ENCODE measurements at regions of chr1 and their contacts with region 1.

Region 1: GRCh38 chr1:226662642-226663326 is 76.3 kb downstream of the ITPKB start:
- DNase-seq: peak; percentile 73
- ATAC-seq: peak; percentile 84
- H3K4me3 Mint-ChIP-seq: peak overlapping the region; percentile 56
- H3K27ac Mint-ChIP-seq: peak overlapping the region; percentile 92
- H3K4me1 Mint-ChIP-seq: peaks cover 89% of the 10 kb centered on the region
- H3K27me3 Mint-ChIP-seq: no peaks in the 10 kb centered on the region
- CTCF ChIP-seq: no peak

Region 2: DNA sequence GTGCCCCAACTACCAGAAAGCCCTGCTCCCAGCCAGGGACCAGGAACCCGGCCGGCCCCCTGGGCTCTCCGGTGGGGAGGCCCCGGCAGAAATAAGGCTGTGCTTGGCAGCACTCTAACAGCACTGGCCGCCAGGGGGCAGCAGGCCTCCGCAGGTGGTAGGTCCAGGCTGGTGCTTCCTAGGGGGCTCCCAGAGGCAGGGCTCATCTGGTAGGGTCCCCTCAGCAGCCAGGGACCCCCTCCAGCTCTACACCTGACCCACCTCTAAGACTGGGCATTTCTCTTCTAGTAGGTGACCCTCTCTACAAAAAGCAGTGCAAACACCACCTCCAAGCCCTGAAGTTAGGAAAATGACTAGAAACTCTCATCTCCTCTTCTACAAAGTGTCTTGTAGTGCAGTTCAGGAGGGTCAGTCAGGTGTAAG is 28.6 kb before region 1 on chr1:
- CTCF ChIA-PET with region 1: interaction called, 6 read pairs
- POLR2A ChIA-PET with region 1: interaction called, 163 read pairs
- intact Hi-C with region 1: loop called (anchors 1 kb)
- DNase-seq: peak; percentile 81
- ATAC-seq: peak; percentile 72
- H3K4me3 Mint-ChIP-seq: no peak overlapping the region
- H3K27ac Mint-ChIP-seq: peak overlapping the region; percentile 60
- H3K4me1 Mint-ChIP-seq: peaks cover 72% of the 10 kb centered on the region
- H3K27me3 Mint-ChIP-seq: no peaks in the 10 kb centered on the region
- CTCF ChIP-seq: peak; percentile 56

Region 3: DNA sequence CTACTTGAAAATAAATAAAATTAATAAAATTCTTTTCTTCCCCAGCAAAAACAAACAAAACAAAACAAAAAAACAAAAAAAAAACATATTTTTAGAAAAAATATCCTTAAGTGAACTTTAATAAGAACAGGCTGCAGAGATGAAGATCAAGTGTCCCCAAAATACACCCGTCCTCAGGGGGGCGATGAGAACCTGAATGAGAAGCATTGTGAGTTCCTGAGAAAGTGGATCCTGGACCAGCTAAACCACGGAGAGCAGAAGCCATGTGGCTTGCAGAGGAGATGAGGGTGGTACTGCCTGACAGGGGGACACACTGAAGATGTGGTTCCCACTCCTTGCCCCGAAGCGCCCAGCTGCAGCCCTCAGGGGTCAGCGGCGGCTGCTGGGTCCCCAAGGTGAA is 13.0 kb before region 1 on chr1:
- CTCF ChIA-PET with region 1: interaction called, 31 read pairs
- POLR2A ChIA-PET with region 1: interaction called, 163 read pairs
- intact Hi-C with region 1: loop called (anchors 1 kb)
- DNase-seq: no peak
- ATAC-seq: no peak
- H3K4me3 Mint-ChIP-seq: no peak overlapping the region
- H3K27ac Mint-ChIP-seq: peak overlapping the region; percentile 11
- H3K4me1 Mint-ChIP-seq: peaks cover 43% of the 10 kb centered on the region
- H3K27me3 Mint-ChIP-seq: no peaks in the 10 kb centered on the region
- CTCF ChIP-seq: no peak

Region 4: GRCh38 chr1:226687426-226687825 is 24.6 kb after region 1 on chr1:
- CTCF ChIA-PET with region 1: interaction called, 10 read pairs
- POLR2A ChIA-PET with region 1: interaction called, 451 read pairs
- intact Hi-C with region 1: loop called (anchors 1 kb)
- DNase-seq: no peak
- ATAC-seq: peak; percentile 12
- H3K4me3 Mint-ChIP-seq: peak overlapping the region; percentile 61
- H3K27ac Mint-ChIP-seq: peak overlapping the region; percentile 91
- H3K4me1 Mint-ChIP-seq: peaks cover 100% of the 10 kb centered on the region
- H3K27me3 Mint-ChIP-seq: no peaks in the 10 kb centered on the region
- CTCF ChIP-seq: no peak

Region 5: GRCh38 chr1:226702957-226703831 is 40.4 kb after region 1 on chr1:
- CTCF ChIA-PET with region 1: interaction called, 11 read pairs
- POLR2A ChIA-PET with region 1: interaction called, 261 read pairs
- intact Hi-C with region 1: loop called (anchors 1 kb)
- DNase-seq: peak; percentile 90
- ATAC-seq: peak; percentile 90
- H3K4me3 Mint-ChIP-seq: peak overlapping the region; percentile 76
- H3K27ac Mint-ChIP-seq: peak overlapping the region; percentile 93
- H3K4me1 Mint-ChIP-seq: peaks cover 78% of the 10 kb centered on the region
- H3K27me3 Mint-ChIP-seq: no peaks in the 10 kb centered on the region
- CTCF ChIP-seq: no peak

Measured in activated B cell treated with CpG ODN at 0.5 μM for 24 hours (primary cell).